B cell (primary cell): ENCODE measurements at regions of chr3 and their contacts with region 1.

Region 1: DNA sequence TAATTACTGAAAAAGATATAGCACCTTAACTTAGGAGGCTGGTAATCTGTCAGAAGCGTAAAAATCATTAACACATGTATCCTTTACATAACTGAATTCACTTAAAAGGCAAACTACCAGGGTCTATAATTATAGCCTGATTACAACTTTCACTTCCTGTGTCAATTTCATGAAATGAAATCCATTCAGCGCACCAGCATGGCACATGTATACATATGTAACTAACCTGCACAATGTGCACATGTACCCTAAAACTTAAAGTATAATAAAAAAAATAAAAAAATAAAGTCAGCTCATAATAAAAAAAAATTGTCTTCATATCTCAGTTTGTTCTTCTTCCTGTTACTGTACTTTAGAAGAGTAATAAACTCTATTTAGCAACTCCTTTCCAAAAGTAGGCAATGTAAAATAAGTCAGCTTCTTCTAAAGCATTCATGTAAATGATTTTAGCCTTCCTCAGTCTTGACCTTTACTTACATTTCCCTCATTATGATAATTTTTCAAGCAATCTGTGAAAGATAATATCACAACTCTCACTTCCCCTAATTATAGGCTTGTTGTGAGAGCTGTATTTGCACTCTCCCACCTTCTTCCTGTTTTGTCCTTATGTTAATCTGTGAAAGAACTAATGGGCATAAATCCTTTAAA is 50.1 kb downstream of the KBTBD8 start:
- DNase-seq: peak; percentile 77
- ATAC-seq: peak; percentile 89
- H3K4me3 ChIP-seq: peak overlapping the region in 4 of 5 experiments; percentile 3 to 28 (median 16)
- H3K4me3 Mint-ChIP-seq: peak overlapping the region; percentile 80
- H3K27ac ChIP-seq: peak overlapping the region; percentile 83 to 87
- H3K27ac Mint-ChIP-seq: peak overlapping the region; percentile 84
- H3K4me1 ChIP-seq: peaks cover 40 to 53% of the 10 kb centered on the region in 2 donors
- H3K4me1 Mint-ChIP-seq: peaks cover 44% of the 10 kb centered on the region
- H3K27me3 ChIP-seq: no peaks in the 10 kb centered on the region
- H3K27me3 Mint-ChIP-seq: no peaks in the 10 kb centered on the region
- CTCF ChIP-seq: no peak

Region 2: GRCh38 chr3:66220602-66221377 is 827.4 kb before region 1 on chr3 and contains the start of gene SLC25A26:
- CTCF ChIA-PET with region 1: no interaction called
- POLR2A ChIA-PET with region 1: no interaction called
- intact Hi-C with region 1: loop called (anchors 1 kb)
- DNase-seq: peak; percentile 96
- ATAC-seq: peak; percentile 95
- H3K4me3 ChIP-seq: peak within 1 kb of the TSS; percentile 74 to 96 (median 79)
- H3K4me3 Mint-ChIP-seq: peak within 1 kb of the TSS; percentile 100
- H3K27ac ChIP-seq: peak within 1 kb of the TSS; percentile 64 to 83
- H3K27ac Mint-ChIP-seq: peak within 1 kb of the TSS; percentile 96
- H3K4me1 ChIP-seq: peaks cover 10 to 14% of the 10 kb centered on the region in 2 donors
- H3K4me1 Mint-ChIP-seq: peaks cover 35% of the 10 kb centered on the region
- H3K27me3 ChIP-seq: no peaks in the 10 kb centered on the region
- H3K27me3 Mint-ChIP-seq: peaks cover 6% of the 10 kb centered on the region
- CTCF ChIP-seq: no peak
- total RNA-seq, gene SLC25A26: 19.7 and 23.8 TPM in 2 replicates

Region 3: DNA sequence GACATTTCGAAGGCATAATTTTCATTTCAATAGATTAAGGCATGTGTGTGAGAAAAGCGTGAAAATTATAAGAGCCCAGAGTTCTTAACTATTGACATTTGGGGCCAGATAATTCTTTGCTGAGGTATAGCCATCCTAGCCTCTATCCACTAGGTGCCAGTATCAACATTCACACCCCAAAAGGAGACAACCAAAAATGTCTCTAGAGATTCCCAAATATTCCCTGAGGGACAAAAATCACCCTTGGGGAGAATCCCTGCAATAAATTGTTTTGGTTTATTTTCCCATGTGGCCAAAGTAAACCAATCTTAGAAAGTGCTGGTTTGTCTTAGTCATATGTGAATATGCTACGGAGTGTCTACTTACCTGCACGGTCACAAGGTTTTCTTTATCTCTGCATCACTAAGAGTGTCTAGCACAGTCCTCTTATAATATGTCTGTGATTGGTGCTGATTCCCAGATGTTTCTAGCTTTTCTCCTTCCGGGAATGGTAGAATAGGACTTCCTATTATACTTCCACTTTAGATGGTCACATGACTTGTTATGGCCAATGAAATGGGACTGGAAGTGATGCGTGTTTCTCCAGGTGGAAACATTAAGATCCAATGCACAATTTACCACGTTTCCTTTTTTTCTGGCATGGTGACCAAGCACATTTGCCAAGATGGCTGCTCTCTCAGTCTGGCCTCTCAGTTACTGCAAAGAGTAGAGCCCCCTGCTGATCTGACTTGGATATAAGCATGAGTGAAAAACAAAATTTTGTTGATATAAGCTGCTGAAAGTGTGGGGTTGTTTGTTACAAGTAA is 58.1 kb before region 1 on chr3:
- CTCF ChIA-PET with region 1: interaction called, 38 read pairs
- POLR2A ChIA-PET with region 1: no interaction called
- intact Hi-C with region 1: no loop called
- DNase-seq: peak; percentile 58
- ATAC-seq: peak; percentile 83
- H3K4me3 ChIP-seq: peak overlapping the region in 4 of 5 experiments; percentile 36 to 61 (median 54)
- H3K4me3 Mint-ChIP-seq: peak overlapping the region; percentile 93
- H3K27ac ChIP-seq: peak overlapping the region in 1 of 2 donors; percentile 37
- H3K27ac Mint-ChIP-seq: peak overlapping the region; percentile 88
- H3K4me1 ChIP-seq: no peaks in the 10 kb centered on the region
- H3K4me1 Mint-ChIP-seq: peaks cover 7% of the 10 kb centered on the region
- H3K27me3 ChIP-seq: no peaks in the 10 kb centered on the region
- H3K27me3 Mint-ChIP-seq: peaks cover 4% of the 10 kb centered on the region
- CTCF ChIP-seq: peak; percentile 63

Region 4: DNA sequence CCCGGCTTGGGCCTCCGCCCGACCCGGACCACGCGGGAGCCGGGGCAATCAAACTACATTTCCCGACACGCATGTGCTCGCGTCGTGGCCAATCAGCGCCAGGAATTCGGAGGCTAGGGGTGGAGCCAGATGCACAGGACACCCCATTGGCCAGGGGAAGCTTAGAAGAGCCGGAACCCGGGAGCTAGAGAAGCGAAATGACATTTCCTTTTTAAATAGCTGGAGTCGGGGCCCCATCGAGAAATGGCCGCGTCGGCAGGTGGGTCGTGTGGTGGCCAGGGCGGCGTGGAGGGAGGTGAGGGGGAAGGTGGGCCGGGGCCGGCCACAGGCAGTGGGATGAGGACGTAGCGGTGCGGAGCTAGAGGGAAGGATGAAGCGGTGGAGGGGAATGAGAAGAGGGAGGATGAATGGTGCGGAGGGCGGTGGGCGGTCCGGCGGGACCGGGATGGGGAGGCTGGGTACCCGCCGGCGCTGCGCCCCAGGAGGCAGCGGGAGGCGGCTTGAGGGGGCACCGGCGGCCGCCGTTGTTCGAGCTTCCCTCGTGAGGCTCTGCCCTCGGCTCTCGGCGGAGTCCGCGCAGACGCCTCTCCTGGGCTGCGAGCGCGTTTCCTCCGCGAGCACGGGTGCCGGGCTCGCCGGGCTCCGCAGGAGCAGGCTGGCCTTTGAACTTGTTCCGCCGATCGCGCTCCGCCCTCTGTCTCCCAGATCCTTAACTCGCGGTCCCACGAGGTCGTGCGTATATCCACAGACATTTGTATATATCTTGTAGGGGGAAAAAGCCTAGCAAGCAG is 49.9 kb before region 1 on chr3 and contains the start of gene KBTBD8:
- CTCF ChIA-PET with region 1: interaction called, 4 read pairs
- POLR2A ChIA-PET with region 1: interaction called, 7 read pairs
- intact Hi-C with region 1: loop called (anchors 1 kb)
- DNase-seq: peak; percentile 99
- ATAC-seq: peak; percentile 86
- H3K4me3 ChIP-seq: peak within 1 kb of the TSS; percentile 68 to 90 (median 82)
- H3K4me3 Mint-ChIP-seq: peak within 1 kb of the TSS; percentile 96
- H3K27ac ChIP-seq: peak within 1 kb of the TSS; percentile 79 to 91
- H3K27ac Mint-ChIP-seq: peak within 1 kb of the TSS; percentile 98
- H3K4me1 ChIP-seq: peaks cover 36 to 41% of the 10 kb centered on the region in 2 donors
- H3K4me1 Mint-ChIP-seq: peaks cover 44% of the 10 kb centered on the region
- H3K27me3 ChIP-seq: no peaks in the 10 kb centered on the region
- H3K27me3 Mint-ChIP-seq: peaks cover 4% of the 10 kb centered on the region
- CTCF ChIP-seq: no peak
- total RNA-seq, gene KBTBD8: 27.6 and 32.6 TPM in 2 replicates

Region 5: DNA sequence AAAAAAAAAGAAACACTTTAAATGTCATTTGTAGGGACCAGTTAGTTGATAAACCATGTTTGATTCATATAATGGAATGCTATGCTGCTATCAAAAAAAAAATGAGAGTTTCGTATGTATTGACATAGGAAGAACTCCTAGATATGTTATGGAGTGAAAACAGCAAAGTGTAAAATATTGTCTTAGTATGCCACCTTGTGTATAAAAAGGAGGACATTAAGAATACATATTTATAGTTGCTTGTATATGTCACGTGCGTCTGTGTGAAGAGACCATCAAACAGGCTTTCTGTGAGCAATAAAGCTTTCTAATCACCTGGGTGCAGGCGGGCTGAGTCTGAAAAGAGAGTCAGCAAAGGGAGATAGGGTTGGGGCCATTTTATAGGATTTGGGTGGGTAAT is 10.6 kb before region 1 on chr3:
- CTCF ChIA-PET with region 1: interaction called, 19 read pairs
- POLR2A ChIA-PET with region 1: no interaction called
- intact Hi-C with region 1: no loop called
- DNase-seq: peak; percentile 42
- ATAC-seq: no peak
- H3K4me3 ChIP-seq: no peak overlapping the region
- H3K4me3 Mint-ChIP-seq: no peak overlapping the region
- H3K27ac ChIP-seq: no peak overlapping the region
- H3K27ac Mint-ChIP-seq: no peak overlapping the region
- H3K4me1 ChIP-seq: peaks cover 4 to 6% of the 10 kb centered on the region in 2 donors
- H3K4me1 Mint-ChIP-seq: peaks cover 6% of the 10 kb centered on the region
- H3K27me3 ChIP-seq: no peaks in the 10 kb centered on the region
- H3K27me3 Mint-ChIP-seq: no peaks in the 10 kb centered on the region
- CTCF ChIP-seq: no peak